Motor neuron (in vitro differentiated cells): ENCODE measurements at regions of chr14 and their contacts with region 1.

Region 1: DNA sequence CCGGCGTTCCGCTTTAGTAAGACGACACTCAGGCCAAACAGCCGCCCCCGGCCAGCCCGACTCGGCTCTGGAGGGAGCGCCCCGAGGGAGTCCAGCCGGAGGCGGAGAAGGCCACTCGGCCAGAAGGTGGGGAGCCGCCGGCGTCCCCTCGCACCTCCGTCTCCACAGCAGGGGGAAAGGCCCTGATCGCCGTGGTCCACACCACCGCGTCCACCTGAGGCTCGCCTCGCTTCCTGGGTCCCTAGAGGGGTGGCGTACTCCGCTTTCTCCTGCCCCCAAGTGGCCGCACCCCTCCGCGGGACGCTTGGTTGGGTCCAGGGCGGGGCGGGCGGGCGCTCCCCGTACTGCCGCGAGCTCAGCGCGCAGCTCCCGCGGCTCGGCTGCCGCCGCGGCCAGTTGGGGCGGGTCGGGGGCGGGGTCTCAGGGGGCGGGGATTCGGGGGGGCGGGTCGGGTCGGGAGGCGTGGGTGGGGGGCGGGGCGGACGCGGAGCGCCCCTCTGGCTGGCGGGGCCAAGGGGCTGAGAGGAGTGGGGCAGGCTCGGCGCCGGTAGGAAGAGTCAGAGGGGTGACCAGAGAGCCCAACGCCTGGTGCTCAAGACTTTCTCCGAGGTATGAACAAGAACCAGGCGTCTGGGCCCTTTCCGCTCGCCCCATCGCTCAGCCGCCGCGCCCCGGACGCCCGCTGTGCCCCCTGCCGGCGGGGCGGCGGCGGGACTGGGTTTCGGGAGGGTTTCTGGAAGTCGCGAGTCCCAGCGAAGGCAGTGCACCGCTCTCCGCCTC is at the start of gene FRMD6:
- ATAC-seq: peak; percentile 64 to 85 (median 80)
- H3K4me3 ChIP-seq: peak within 1 kb of the TSS; percentile 61 to 91 (median 80)
- H3K27ac ChIP-seq: peak within 1 kb of the TSS; percentile 98
- H3K4me1 ChIP-seq: peaks cover 2 to 8% of the 10 kb centered on the region in 2 donors
- total RNA-seq, gene FRMD6: 2.8 to 129 (median 19.4) TPM

Region 2: DNA sequence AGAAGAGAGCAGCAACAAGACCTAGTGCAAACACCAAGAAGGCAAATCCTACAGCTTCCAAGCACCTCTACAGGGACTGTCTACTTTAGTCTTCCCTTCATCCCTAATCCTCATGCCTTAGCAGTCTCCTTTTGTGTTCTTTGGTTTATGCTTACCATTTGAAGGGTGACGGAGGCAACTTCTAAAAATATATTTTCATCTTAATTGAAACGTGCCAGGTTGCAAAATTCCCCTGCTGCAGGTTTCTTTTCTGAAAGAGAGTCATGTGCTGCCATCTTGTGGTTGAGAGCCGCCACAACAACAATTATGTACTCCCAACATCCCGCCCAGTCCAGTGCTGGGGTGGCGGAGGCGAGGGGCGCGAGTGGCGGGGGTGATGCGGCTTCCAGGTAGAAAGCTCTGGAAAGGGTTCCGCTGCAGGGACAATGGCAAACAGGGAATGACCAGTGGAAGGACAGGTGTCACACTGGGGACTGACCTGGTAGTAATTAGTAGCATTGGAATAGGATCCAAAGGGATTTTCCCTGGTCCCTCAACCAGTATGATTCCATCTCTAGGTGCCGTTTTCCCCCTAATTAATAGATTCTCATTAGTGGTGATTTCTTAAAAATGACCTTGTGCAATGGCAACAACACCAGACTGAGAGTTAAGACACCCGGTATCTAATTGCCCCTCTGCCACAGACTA is 128.6 kb after region 1 on chr14:
- in situ Hi-C with region 1: loop called in 1 of 9 experiments (anchors 10 kb)
- ATAC-seq: peak; percentile 65 to 81 (median 74)
- H3K4me3 ChIP-seq: no peak overlapping the region
- H3K27ac ChIP-seq: no peak overlapping the region
- H3K4me1 ChIP-seq: peaks cover 3 to 7% of the 10 kb centered on the region in 2 donors

Region 3: DNA sequence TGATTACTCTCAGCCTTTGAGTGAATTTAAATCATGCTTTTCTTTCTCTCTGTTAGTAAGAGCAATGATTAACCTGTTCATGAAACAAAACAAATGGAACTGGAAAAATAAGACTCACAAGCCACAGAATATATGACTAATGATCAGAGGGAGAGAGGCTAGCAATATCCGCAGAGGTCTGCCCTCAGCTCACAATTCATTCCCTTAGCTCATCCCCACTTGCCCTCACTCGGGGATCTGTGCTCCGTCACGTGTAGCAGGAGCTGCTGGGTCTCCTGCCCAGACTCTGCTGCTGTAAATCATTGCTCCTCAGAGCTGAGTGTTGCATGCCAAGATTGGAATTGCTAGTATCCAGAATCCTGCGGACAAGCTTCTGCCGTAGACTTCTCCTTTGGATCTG is 155.8 kb after region 1 on chr14:
- in situ Hi-C with region 1: no loop called
- ATAC-seq: peak in 5 of 8 experiments; percentile 92 to 97 (median 97)
- H3K4me3 ChIP-seq: no peak overlapping the region
- H3K27ac ChIP-seq: peak overlapping the region in 1 of 2 donors; percentile 62
- H3K4me1 ChIP-seq: peaks cover 13 to 26% of the 10 kb centered on the region in 2 donors